Activated B cell treated with CpG ODN at 0.5 μM for 24 hours (primary cell): ENCODE measurements at regions of chr15 and their contacts with region 1.

Region 1: GRCh38 chr15:67863442-67863987 is 23.7 kb upstream of the RNU6-1 start:
- DNase-seq: peak; percentile 70
- ATAC-seq: peak; percentile 92
- H3K4me3 Mint-ChIP-seq: peak overlapping the region; percentile 77
- H3K27ac Mint-ChIP-seq: peak overlapping the region; percentile 88
- H3K4me1 Mint-ChIP-seq: peaks cover 17% of the 10 kb centered on the region
- H3K27me3 Mint-ChIP-seq: peaks cover 6% of the 10 kb centered on the region
- CTCF ChIP-seq: peak; percentile 70

Region 2: GRCh38 chr15:67613708-67614107 is 249.8 kb before region 1 on chr15:
- CTCF ChIA-PET with region 1: no interaction called
- POLR2A ChIA-PET with region 1: no interaction called
- intact Hi-C with region 1: no loop called
- DNase-seq: no peak
- ATAC-seq: no peak
- H3K4me3 Mint-ChIP-seq: no peak overlapping the region
- H3K27ac Mint-ChIP-seq: no peak overlapping the region
- H3K4me1 Mint-ChIP-seq: no peaks in the 10 kb centered on the region
- H3K27me3 Mint-ChIP-seq: no peaks in the 10 kb centered on the region
- CTCF ChIP-seq: no peak

Region 3: GRCh38 chr15:68154923-68155559 is 291.5 kb after region 1 on chr15:
- CTCF ChIA-PET with region 1: interaction called, 77 read pairs
- POLR2A ChIA-PET with region 1: interaction called, 3 read pairs
- intact Hi-C with region 1: loop called (anchors 1 kb)
- DNase-seq: no peak
- ATAC-seq: no peak
- H3K4me3 Mint-ChIP-seq: no peak overlapping the region
- H3K27ac Mint-ChIP-seq: no peak overlapping the region
- H3K4me1 Mint-ChIP-seq: no peaks in the 10 kb centered on the region
- H3K27me3 Mint-ChIP-seq: no peaks in the 10 kb centered on the region
- CTCF ChIP-seq: no peak

Region 4: GRCh38 chr15:68210821-68211655 is 347.5 kb after region 1 on chr15:
- CTCF ChIA-PET with region 1: interaction called, 3 read pairs
- POLR2A ChIA-PET with region 1: no interaction called
- intact Hi-C with region 1: loop called (anchors 1 kb)
- DNase-seq: peak; percentile 49
- ATAC-seq: peak; percentile 49
- H3K4me3 Mint-ChIP-seq: no peak overlapping the region
- H3K27ac Mint-ChIP-seq: no peak overlapping the region
- H3K4me1 Mint-ChIP-seq: peaks cover 32% of the 10 kb centered on the region
- H3K27me3 Mint-ChIP-seq: no peaks in the 10 kb centered on the region
- CTCF ChIP-seq: no peak

Region 5: DNA sequence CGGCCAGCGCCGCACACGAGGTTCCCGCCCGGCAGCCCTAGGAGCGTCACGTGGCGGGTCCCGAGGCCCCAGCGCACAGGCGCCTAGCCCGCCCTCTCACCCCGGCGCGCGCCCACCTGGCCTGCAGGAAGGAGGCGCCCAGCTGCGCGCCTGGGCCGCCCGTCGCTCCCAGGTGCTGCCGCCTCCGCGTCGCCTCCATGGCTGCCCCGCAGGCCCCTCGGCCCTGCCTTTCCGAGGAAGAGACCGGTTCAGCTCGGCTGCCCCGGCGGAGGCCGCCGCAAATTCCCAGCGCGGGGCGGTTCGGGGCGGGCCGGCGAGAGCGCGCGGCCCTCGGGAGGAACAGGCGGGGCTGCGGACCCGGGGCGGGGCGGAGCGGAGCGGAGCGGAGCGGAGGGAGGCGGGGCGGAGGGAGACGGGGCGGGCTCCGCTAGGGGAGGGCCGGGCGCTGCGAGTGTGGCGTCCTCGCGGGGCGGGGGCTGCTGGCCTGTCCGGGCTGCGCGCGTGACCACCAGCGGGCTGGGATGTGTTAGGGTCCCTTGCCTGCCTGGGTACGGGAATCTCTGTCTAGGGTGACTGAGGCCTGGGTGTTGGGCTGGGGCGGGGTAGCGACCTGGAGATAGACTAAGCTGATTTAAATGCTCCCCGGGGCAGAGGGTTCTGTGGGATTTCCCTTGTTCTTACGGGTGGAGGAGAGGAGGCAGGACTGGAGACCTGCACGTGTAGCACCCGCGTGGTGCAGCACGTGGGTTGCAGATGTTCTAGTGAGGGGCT is 366.1 kb after region 1 on chr15 and contains the start of gene CLN6:
- CTCF ChIA-PET with region 1: interaction called, 3 read pairs
- POLR2A ChIA-PET with region 1: no interaction called
- intact Hi-C with region 1: loop called (anchors 1 kb)
- DNase-seq: peak; percentile 85
- ATAC-seq: peak; percentile 88
- H3K4me3 Mint-ChIP-seq: peak within 1 kb of the TSS; percentile 92
- H3K27ac Mint-ChIP-seq: peak within 1 kb of the TSS; percentile 89
- H3K4me1 Mint-ChIP-seq: peaks cover 50% of the 10 kb centered on the region
- H3K27me3 Mint-ChIP-seq: no peaks in the 10 kb centered on the region
- CTCF ChIP-seq: no peak
- total RNA-seq, gene CLN6: 35.0 and 37.5 TPM in 2 replicates